ENCODE measurements at regions of chr2 and their contacts with region 1.

Region 1: GRCh38 chr2:65227425-65228262 is at the start of gene ACTR2:
- DNase-seq: peak; percentile 94
- H3K4me3 Mint-ChIP-seq: peak within 1 kb of the TSS; percentile 97
- H3K27ac Mint-ChIP-seq: peak within 1 kb of the TSS; percentile 100
- H3K4me1 Mint-ChIP-seq: peaks cover 10% of the 10 kb centered on the region
- H3K27me3 Mint-ChIP-seq: no peaks in the 10 kb centered on the region
- CTCF ChIP-seq: no peak
- total RNA-seq, gene ACTR2: 263 and 273 TPM in 2 replicates

Region 2: GRCh38 chr2:65056215-65057053 is 171.2 kb before region 1 on chr2 and contains the start of gene CEP68:
- CTCF ChIA-PET with region 1: interaction called, 3 read pairs
- POLR2A ChIA-PET with region 1: interaction called, 40 read pairs
- intact Hi-C with region 1: no loop called
- DNase-seq: peak; percentile 97
- H3K4me3 Mint-ChIP-seq: peak within 1 kb of the TSS; percentile 90
- H3K27ac Mint-ChIP-seq: peak within 1 kb of the TSS; percentile 41
- H3K4me1 Mint-ChIP-seq: peaks cover 10% of the 10 kb centered on the region
- H3K27me3 Mint-ChIP-seq: no peaks in the 10 kb centered on the region
- CTCF ChIP-seq: no peak
- total RNA-seq, gene CEP68: 5.4 and 7.2 TPM in 2 replicates

Region 3: DNA sequence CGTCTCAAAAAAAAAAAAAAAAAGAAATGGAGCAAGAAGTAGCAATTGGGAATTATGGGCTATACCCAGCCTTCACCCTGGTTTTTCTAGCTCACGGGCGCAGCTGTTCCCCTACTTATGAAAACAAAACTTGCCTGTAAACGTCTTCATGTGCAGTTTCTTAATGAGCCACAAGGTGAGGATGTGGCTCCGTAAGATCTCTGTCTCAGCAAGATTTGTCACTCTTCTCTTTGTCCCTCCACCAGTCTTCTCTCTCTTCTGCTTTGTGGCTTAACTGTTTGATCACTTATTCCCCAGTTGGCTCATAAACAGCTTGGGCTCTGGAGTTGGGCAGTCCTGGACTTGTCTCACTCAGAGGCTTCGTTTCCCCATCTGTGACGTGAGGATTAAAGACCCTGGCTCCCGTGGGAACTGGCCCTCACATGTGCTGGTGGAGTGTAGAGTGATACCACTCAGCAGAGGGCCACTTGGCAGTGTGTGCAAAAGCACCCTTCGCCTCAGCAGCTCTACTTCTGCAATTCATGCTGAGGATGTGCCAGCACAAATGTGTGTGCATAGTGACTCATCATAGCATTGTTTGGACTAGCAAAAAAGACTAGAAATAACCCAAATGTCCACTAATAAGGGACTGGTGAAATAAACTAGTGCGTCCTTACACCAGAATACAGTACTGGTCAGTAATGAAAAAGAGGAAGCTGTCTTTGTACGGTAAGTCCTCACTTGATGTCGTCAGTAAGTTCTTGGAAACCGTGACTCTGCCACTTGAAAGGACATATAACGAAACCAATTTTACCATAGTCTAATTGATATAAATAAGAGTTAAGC is 162.7 kb before region 1 on chr2:
- CTCF ChIA-PET with region 1: interaction called, 4 read pairs
- POLR2A ChIA-PET with region 1: interaction called, 12 read pairs
- intact Hi-C with region 1: no loop called
- DNase-seq: peak; percentile 90
- H3K4me3 Mint-ChIP-seq: peak overlapping the region; percentile 7
- H3K27ac Mint-ChIP-seq: peak overlapping the region; percentile 65
- H3K4me1 Mint-ChIP-seq: peaks cover 20% of the 10 kb centered on the region
- H3K27me3 Mint-ChIP-seq: no peaks in the 10 kb centered on the region
- CTCF ChIP-seq: peak; percentile 42

Region 4: DNA sequence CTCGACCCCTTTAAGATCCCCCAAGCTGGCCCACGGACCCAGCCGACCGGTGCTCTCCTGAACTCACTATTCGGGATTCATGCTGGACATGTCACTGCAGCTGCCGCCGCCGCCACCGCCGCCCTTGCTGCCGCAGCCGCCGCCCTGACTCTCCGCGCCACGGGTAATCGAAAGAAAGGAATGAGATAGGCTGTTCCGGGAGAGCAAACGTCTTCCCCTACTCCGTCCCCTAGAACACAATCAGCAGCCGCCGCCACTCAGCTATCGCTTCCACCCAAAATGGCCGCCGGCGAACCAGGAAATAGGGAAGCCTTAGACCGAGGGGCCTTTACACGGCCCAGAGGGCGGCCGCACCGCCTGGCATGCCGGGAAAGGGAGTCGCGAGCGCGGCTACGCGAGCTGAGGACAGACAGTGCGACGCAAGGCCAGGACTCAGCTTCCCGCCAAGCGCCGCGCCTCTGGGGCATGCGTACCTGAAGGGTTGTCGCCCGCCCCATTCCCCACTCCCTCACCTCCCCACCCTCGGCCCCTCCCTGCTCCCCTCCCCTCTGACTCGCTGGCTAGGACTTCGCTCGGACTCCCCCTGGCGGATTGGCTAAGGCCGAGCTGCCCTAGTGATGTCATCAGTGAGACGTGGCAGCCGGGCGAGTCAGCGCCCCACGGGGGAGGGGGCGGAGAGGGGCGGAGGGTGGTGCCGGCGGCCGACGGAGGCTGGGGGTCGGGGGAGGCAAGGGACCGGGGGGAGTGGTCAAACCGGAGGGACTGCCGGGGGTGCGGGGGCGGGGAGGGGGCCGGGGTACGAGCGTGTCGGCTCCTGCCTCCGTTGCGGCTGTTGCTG is 97.6 kb before region 1 on chr2 and contains the start of gene RAB1A:
- CTCF ChIA-PET with region 1: interaction called, 3 read pairs
- POLR2A ChIA-PET with region 1: interaction called, 44 read pairs
- intact Hi-C with region 1: loop called (anchors 2 kb)
- DNase-seq: peak; percentile 99
- H3K4me3 Mint-ChIP-seq: peak within 1 kb of the TSS; percentile 84
- H3K27ac Mint-ChIP-seq: peak within 1 kb of the TSS; percentile 97
- H3K4me1 Mint-ChIP-seq: peaks cover 10% of the 10 kb centered on the region
- H3K27me3 Mint-ChIP-seq: no peaks in the 10 kb centered on the region
- CTCF ChIP-seq: peak; percentile 31
- total RNA-seq, gene RAB1A: 128 and 131 TPM in 2 replicates

Region 5: DNA sequence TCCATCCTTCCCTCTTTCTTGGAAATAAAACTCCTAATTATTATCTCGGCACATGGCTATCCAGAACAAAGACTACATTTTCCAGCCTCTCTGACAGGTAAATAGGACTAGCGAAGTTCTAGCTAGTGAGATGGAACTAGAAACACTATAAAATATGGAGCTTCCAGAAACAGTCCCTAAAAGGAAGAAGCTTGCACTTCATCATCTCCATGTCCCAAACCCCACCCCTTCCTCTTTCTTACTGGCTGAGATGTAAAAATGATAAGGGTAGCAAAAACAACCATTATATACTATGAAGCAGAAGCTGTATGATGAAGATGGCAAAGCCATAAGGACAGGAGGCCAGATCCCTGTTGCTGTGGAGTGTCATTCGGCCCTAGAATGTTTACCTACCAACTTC is 11.7 kb before region 1 on chr2:
- CTCF ChIA-PET with region 1: no interaction called
- POLR2A ChIA-PET with region 1: interaction called, 28 read pairs
- intact Hi-C with region 1: no loop called
- DNase-seq: no peak
- H3K4me3 Mint-ChIP-seq: no peak overlapping the region
- H3K27ac Mint-ChIP-seq: no peak overlapping the region
- H3K4me1 Mint-ChIP-seq: peaks cover 5% of the 10 kb centered on the region
- H3K27me3 Mint-ChIP-seq: no peaks in the 10 kb centered on the region
- CTCF ChIP-seq: no peak

Region 6: GRCh38 chr2:65240657-65241056 is 13.0 kb after region 1 on chr2:
- CTCF ChIA-PET with region 1: interaction called, 3 read pairs
- POLR2A ChIA-PET with region 1: interaction called, 13 read pairs
- intact Hi-C with region 1: no loop called
- DNase-seq: peak; percentile 36
- H3K4me3 Mint-ChIP-seq: no peak overlapping the region
- H3K27ac Mint-ChIP-seq: peak overlapping the region; percentile 16
- H3K4me1 Mint-ChIP-seq: peaks cover 8% of the 10 kb centered on the region
- H3K27me3 Mint-ChIP-seq: no peaks in the 10 kb centered on the region
- CTCF ChIP-seq: no peak

Region 7: GRCh38 chr2:65566620-65567019 is 339.0 kb after region 1 on chr2:
- CTCF ChIA-PET with region 1: no interaction called
- POLR2A ChIA-PET with region 1: interaction called, 14 read pairs
- intact Hi-C with region 1: no loop called
- DNase-seq: peak; percentile 73
- H3K4me3 Mint-ChIP-seq: peak overlapping the region; percentile 79
- H3K27ac Mint-ChIP-seq: peak overlapping the region; percentile 92
- H3K4me1 Mint-ChIP-seq: peaks cover 31% of the 10 kb centered on the region
- H3K27me3 Mint-ChIP-seq: no peaks in the 10 kb centered on the region
- CTCF ChIP-seq: no peak

Region 8: GRCh38 chr2:65666156-65666725 is 438.6 kb after region 1 on chr2:
- CTCF ChIA-PET with region 1: no interaction called
- POLR2A ChIA-PET with region 1: no interaction called
- intact Hi-C with region 1: no loop called
- DNase-seq: peak; percentile 56
- H3K4me3 Mint-ChIP-seq: no peak overlapping the region
- H3K27ac Mint-ChIP-seq: peak overlapping the region; percentile 17
- H3K4me1 Mint-ChIP-seq: peaks cover 17% of the 10 kb centered on the region
- H3K27me3 Mint-ChIP-seq: no peaks in the 10 kb centered on the region
- CTCF ChIP-seq: no peak